ENCODE measurements at regions of chr14 and their contacts with region 1.

Region 1: GRCh38 chr14:76784266-76785264 is 23.3 kb downstream of the VASH1 start:
- DNase-seq: peak in 1 of 2 donors; percentile 41
- H3K4me3 ChIP-seq: no peak overlapping the region
- H3K27ac ChIP-seq: no peak overlapping the region
- H3K4me1 ChIP-seq: no peaks in the 10 kb centered on the region
- H3K27me3 ChIP-seq: no peaks in the 10 kb centered on the region
- CTCF ChIP-seq: peak; percentile 26 to 47 (median 38)
- POLR2A ChIP-seq: no peak

Region 2: DNA sequence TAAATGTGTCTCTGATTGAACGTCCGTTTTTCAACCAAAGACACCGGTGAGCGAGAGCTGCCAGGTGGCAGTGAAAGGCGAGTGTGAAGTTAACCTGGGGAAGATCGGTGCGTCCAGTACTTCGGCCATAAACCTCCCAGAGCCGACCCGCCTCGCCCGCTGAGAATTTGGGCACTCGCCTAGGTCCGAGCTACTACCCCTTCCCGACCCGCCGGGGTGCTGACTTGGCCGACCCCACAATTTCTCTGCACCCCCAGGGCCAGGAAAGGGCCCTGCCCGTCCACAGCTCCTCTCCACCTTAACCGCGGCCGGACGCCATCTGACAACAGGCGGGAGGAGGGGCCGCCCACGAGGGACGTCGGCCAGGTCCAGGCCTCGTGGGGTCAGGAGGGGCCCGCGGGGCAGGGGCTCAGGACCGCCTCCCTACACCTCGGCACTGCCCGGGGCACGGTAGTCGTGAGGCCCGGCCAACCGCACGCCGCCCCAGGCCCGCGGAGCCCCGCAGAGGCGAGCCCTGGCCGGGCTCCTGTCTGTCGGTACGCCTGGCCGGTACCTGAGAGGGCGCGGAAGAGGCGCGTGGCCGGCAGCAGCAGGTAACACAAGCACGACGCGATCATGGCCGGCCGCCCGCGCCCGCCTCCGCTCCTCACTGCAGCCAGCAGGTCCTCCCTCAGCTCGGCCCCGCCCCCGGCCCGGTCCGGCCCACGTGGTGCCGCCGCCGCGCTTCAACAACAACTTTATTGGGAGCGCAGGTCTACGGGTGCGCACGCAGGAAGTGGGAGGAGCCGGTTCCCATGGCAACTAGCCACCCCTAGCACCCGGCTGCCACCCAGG is 27.9 kb after region 1 on chr14 and contains the start of gene ANGEL1:
- intact Hi-C with region 1: loop called (anchors 2 kb)
- DNase-seq: peak; percentile 97
- H3K4me3 ChIP-seq: peak within 1 kb of the TSS; percentile 64 to 98 (median 92)
- H3K27ac ChIP-seq: peak within 1 kb of the TSS; percentile 86 to 97
- H3K4me1 ChIP-seq: peaks cover 0 to 9% of the 10 kb centered on the region in 2 donors
- H3K27me3 ChIP-seq: no peaks in the 10 kb centered on the region
- CTCF ChIP-seq: no peak
- POLR2A ChIP-seq: peak; percentile 58
- total RNA-seq, gene ANGEL1: 18.6 to 30.5 (median 24.7) TPM

Region 3: GRCh38 chr14:77469539-77469938 is 685.0 kb after region 1 on chr14:
- intact Hi-C with region 1: loop called (anchors 5 kb)
- DNase-seq: no peak
- H3K4me3 ChIP-seq: no peak overlapping the region
- H3K27ac ChIP-seq: no peak overlapping the region
- H3K4me1 ChIP-seq: no peaks in the 10 kb centered on the region
- H3K27me3 ChIP-seq: no peaks in the 10 kb centered on the region
- CTCF ChIP-seq: no peak
- POLR2A ChIP-seq: no peak

Region 4: GRCh38 chr14:77924141-77924948 is 1139.8 kb after region 1 on chr14:
- intact Hi-C with region 1: no loop called
- DNase-seq: no peak
- H3K4me3 ChIP-seq: no peak overlapping the region
- H3K27ac ChIP-seq: no peak overlapping the region
- H3K4me1 ChIP-seq: no peaks in the 10 kb centered on the region
- H3K27me3 ChIP-seq: no peaks in the 10 kb centered on the region
- CTCF ChIP-seq: no peak
- POLR2A ChIP-seq: no peak

Measured in breast epithelium (tissue), 4 donors.